Sigmoid colon (tissue), 7 donors: ENCODE measurements at regions of chr17 and their contacts with region 1.

Region 1: DNA sequence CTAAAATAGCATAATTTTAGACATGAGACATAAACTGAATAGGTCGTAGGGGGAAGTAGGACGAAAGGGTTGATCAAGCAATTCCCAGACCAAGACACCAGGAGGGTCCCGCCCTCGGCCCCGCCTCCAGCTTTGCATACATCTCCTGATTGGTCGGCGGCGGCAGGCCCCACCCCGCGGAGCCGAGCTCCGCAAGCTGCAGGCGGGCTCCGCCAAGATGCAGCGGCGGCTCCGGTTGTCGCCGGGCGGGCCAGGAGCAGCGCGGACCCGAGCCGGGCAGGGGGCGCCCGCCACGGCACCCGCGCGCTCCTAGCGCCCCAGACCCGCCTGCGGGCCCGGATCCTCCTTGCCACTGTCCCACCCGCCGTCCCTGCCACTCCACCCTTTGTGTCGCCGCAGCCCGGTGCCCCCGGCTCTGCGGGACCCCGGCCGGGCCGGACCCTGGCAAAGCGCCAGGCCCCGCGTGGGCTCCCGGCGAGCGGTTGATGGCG is at the start of gene CDR2L:
- DNase-seq: peak; percentile 99
- H3K4me3 ChIP-seq: peak within 1 kb of the TSS; percentile 53 to 95 (median 84)
- H3K27ac ChIP-seq: peak within 1 kb of the TSS; percentile 91 to 98 (median 96)
- H3K4me1 ChIP-seq: peaks cover 0 to 34% (median 24%) of the 10 kb centered on the region in 4 donors
- H3K27me3 ChIP-seq: no peaks in the 10 kb centered on the region
- CTCF ChIP-seq: no peak
- EP300 ChIP-seq: no peak
- POLR2A ChIP-seq: peak in 1 of 2 donors; percentile 28
- total RNA-seq, gene CDR2L: 9.3 to 16.9 (median 10.3) TPM

Region 2: GRCh38 chr17:75012346-75013091 is 25.1 kb after region 1 on chr17 and contains the start of gene MRPL58:
- intact Hi-C with region 1: loop called (anchors 1 kb)
- DNase-seq: peak; percentile 93
- H3K4me3 ChIP-seq: peak within 1 kb of the TSS; percentile 76 to 82 (median 78)
- H3K27ac ChIP-seq: peak within 1 kb of the TSS; percentile 93 to 99 (median 96)
- H3K4me1 ChIP-seq: peaks cover 0 to 34% (median 29%) of the 10 kb centered on the region in 4 donors
- H3K27me3 ChIP-seq: no peaks in the 10 kb centered on the region
- CTCF ChIP-seq: peak; percentile 51 to 73 (median 57)
- EP300 ChIP-seq: no peak
- POLR2A ChIP-seq: peak in 1 of 2 donors; percentile 5
- total RNA-seq, gene MRPL58: 46.3 to 104 (median 62.5) TPM

Region 3: GRCh38 chr17:75034236-75034908 is 46.9 kb after region 1 on chr17:
- intact Hi-C with region 1: loop called (anchors 5 kb)
- DNase-seq: peak; percentile 95
- H3K4me3 ChIP-seq: peak overlapping the region; percentile 52 to 73 (median 63)
- H3K27ac ChIP-seq: peak overlapping the region; percentile 85 to 94 (median 94)
- H3K4me1 ChIP-seq: peaks cover 0 to 45% (median 36%) of the 10 kb centered on the region in 4 donors
- H3K27me3 ChIP-seq: no peaks in the 10 kb centered on the region
- CTCF ChIP-seq: peak in 1 of 4 experiments; percentile 25
- EP300 ChIP-seq: no peak
- POLR2A ChIP-seq: no peak

Region 4: DNA sequence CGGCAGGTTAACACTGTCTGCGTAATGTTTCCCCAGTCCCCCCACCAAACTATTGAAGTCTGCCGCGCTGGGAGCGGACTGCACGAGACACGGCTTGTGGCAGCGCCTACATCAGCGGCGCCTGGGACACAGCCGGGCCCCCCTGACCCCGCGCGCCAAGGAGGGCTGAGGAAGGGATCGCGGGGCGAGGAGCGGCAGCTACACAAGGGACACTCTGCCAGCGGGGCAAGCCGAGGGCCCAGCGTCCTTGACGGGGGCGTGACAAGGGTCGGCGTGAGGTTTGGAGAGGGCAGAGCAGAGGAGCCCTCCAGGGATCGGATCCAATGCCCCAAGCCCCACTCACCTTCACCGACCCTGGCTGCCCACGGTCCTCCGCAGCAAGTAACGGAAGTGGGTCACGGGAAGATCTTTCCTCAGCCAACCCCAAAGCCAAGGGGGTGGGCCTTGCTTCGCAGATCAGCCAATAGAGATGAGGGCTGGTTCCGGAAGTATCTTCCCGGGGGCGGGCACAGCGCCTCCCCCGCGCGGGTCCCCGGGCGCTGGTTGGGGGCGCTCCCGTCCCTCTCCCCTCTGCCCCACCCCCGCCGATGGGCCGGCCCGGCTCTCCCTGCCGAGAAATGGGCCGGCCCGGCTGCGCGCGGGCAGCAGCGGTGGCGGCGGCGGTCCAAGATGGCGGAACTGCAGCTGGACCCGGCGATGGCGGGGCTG is 59.3 kb after region 1 on chr17 and contains the starts of genes ATP5PD and KCTD2:
- intact Hi-C with region 1: loop called (anchors 5 kb)
- DNase-seq: peak; percentile 99
- H3K4me3 ChIP-seq: peak within 1 kb of the TSS; percentile 78 to 99 (median 92)
- H3K27ac ChIP-seq: peak within 1 kb of the TSS; percentile 96 to 100 (median 98)
- H3K4me1 ChIP-seq: peaks cover 0 to 35% (median 28%) of the 10 kb centered on the region in 4 donors
- H3K27me3 ChIP-seq: no peaks in the 10 kb centered on the region
- CTCF ChIP-seq: no peak
- EP300 ChIP-seq: no peak
- POLR2A ChIP-seq: peak; percentile 97 to 98
- total RNA-seq, gene ATP5PD: 303 to 480 (median 367) TPM
- total RNA-seq, gene KCTD2: 19.6 to 25.5 (median 21.8) TPM